GM12878 (cell line): ENCODE measurements at regions of chr7 and their contacts with region 1.

Region 1: GRCh38 chr7:117312598-117313580 is 10.0 kb downstream of the WNT2 start:
- DNase-seq: no peak
- ATAC-seq: peak; percentile 48; the same call in 2 of the 3 replicates
- H3K4me3 ChIP-seq: no peak overlapping the region
- H3K27ac ChIP-seq: no peak overlapping the region
- H3K4me1 ChIP-seq: no peaks in the 10 kb centered on the region
- H3K27me3 ChIP-seq: no peaks in the 10 kb centered on the region
- CTCF ChIP-seq: peak in 1 of 3 experiments; percentile 47; a peak in 1 of 6 replicates
- EP300 ChIP-seq: no peak
- POLR2A ChIP-seq: no peak
- RAD21 ChIP-seq: peak; percentile 56

Region 2: GRCh38 chr7:117186218-117187010 is 126.5 kb before region 1 on chr7:
- CTCF ChIA-PET with region 1: no interaction called
- POLR2A ChIA-PET with region 1: no interaction called
- RAD21 ChIA-PET with region 1: no interaction called
- SMC1A ChIA-PET with region 1: no interaction called
- in situ Hi-C with region 1: no loop called
- intact Hi-C with region 1: no loop called
- DNase-seq: no peak
- ATAC-seq: no peak
- H3K4me3 ChIP-seq: no peak overlapping the region
- H3K27ac ChIP-seq: no peak overlapping the region
- H3K4me1 ChIP-seq: no peaks in the 10 kb centered on the region
- H3K27me3 ChIP-seq: no peaks in the 10 kb centered on the region
- CTCF ChIP-seq: no peak
- EP300 ChIP-seq: no peak
- POLR2A ChIP-seq: no peak
- RAD21 ChIP-seq: no peak

Region 3: DNA sequence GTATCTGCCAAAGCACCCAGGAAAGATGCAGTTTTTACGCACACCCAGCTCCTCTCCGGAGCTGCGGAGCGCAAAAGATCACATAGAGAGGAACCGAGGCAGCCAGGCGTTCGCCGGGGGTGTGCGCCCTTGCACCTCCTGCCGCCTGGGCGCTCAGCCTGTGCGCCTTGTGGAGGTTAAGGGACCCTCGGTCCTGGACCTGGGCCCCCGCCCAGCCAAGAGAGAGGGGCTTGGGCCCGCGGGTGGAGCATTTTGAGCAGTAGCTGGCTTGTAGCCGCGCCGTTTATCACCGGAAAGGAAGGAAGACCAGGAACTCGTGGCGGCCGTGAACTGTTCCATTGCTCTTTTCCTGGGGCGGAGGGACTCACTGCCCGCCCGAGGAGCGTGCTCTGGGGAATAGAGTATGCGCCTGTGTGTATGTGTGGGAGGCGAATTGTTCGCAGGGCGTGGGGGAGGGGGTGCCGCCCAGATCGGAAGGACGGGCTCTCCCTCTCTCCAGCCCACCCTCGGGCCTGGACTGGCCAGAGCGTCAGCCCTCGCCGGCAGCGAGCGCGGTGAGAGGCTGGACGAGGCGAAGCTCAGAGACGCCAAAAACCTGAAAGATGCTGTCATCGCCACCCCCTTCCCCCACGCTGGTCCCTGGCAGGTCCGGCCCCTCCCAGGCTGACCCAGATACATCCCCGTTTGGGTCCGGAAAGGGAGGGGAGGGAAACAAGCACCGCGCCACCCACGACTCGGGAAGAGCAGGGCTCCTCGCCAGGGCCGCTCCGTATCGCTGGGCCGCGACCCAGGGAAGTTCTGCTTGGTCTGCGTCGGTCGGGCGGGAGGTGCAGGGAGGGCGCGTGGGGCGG is 11.2 kb after region 1 on chr7:
- CTCF ChIA-PET with region 1: interaction called, 6 read pairs
- POLR2A ChIA-PET with region 1: no interaction called
- RAD21 ChIA-PET with region 1: interaction called, 7 read pairs
- SMC1A ChIA-PET with region 1: interaction called, 11 read pairs
- in situ Hi-C with region 1: no loop called
- intact Hi-C with region 1: no loop called
- DNase-seq: no peak
- ATAC-seq: peak; percentile 64
- H3K4me3 ChIP-seq: peak overlapping the region; percentile 49
- H3K27ac ChIP-seq: no peak overlapping the region
- H3K4me1 ChIP-seq: no peaks in the 10 kb centered on the region
- H3K27me3 ChIP-seq: peaks cover 10 to 27% of the 10 kb centered on the region in 2 experiments
- CTCF ChIP-seq: no peak
- EP300 ChIP-seq: no peak
- POLR2A ChIP-seq: no peak
- RAD21 ChIP-seq: no peak

Region 4: DNA sequence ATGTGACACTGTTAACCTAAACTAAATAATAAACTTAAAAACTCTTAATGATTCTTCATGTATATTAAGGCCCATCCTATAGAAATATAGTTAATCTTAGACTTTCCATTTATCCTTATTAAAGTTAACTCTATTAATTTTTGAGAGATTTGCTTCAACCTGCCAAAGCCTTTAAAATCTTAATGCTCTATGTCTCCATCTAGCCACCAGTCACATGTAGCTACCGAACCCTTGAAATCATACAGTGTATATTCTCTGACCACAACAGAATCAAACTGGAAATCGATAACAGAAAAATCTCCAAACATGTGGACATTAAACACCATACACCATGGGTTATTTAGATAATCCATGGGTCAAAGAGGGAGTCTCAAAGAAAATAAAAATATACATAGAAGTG is 62.5 kb after region 1 on chr7:
- CTCF ChIA-PET with region 1: interaction called, 7 read pairs
- POLR2A ChIA-PET with region 1: interaction called, 3 read pairs
- RAD21 ChIA-PET with region 1: interaction called, 11 read pairs
- SMC1A ChIA-PET with region 1: interaction called, 14 read pairs
- in situ Hi-C with region 1: no loop called
- intact Hi-C with region 1: no loop called
- DNase-seq: no peak
- ATAC-seq: no peak
- H3K4me3 ChIP-seq: no peak overlapping the region
- H3K27ac ChIP-seq: no peak overlapping the region
- H3K4me1 ChIP-seq: no peaks in the 10 kb centered on the region
- H3K27me3 ChIP-seq: no peaks in the 10 kb centered on the region
- CTCF ChIP-seq: peak in 1 of 3 experiments; percentile 22; a peak in 2 of 6 replicates
- EP300 ChIP-seq: no peak
- POLR2A ChIP-seq: no peak
- RAD21 ChIP-seq: 0 out of 2 replicates have a peak, but pooled peaks have one; percentile 22